Sciatic nerve (tissue), 2 donors: ENCODE measurements at regions of chr6 and their contacts with region 1.

Region 1: DNA sequence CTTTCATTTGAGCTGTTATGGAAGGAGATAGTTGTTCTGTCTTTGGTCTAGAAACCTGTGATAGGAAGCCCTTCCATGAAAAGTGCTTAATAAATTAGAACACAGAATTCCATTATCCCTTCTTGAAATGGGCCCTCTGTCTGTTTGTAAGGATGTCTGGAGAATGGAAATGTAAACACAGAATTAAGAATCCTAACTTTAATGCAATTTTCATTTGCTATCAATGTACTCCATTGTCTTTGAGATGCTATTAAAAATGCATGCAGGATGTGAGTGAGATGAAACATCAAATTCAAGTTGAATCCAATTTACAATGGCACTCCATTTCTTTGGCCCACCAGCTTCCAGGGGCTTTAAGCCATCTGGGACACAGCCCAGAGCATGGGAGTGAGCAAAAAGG is 13.9 kb upstream of the AARS2 start:
- DNase-seq: no peak
- ATAC-seq: no peak

Region 2: DNA sequence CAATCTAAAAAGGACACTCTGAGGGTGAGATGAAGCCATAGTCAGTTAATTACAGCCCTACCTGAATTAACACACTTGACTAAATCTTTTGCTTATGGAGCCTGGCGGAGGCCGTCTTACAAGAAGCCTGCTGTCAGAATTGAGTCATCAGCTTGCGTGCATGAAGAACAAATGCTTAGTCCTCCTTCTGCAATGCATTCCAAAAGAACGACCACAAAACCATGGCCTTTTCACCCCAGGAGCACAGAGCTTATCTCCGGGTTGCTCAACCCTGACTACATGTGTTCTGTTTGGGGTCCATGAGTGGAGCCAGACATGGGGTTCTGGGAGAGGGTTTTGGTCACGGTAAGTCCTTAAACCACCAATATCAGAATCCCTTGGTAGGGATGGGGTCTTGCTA is 1370.5 kb after region 1 on chr6:
- intact Hi-C with region 1: loop called (anchors 10 kb)
- DNase-seq: no peak
- ATAC-seq: no peak